Activated naive CD4-positive, alpha-beta T cell treated with anti-CD3 and anti-CD28 coated beads for 36 hours (primary cell): ENCODE measurements at regions of chr2 and their contacts with region 1.

Region 1: DNA sequence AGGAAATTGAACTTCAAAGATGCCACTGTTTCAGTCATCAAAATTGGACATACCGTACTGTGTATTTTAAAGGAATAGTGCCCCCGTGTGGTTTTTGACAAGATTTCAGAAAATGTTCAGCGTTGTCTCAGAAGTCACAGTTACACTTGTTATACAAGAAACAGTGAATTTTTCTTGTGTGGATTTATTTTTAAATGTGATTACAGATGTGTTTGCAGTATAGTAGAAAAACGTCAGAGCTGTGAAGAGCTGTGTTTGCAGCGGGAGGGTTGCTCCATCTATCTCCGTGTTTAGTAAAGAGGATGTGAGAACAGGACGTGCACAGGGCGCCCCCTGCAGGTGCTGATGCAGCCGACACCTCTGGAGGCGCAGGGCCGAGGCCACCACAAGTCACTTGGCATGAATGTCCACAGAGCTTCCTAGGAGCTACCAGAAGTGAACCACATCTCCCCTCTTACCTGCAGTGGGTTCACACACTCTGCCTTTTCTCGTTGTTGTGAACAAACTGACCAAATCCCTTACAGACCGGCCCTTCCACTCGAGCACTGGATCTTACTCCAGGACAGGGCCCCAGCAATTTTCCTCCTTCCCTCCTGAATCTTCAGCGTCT is 73.1 kb downstream of the CACNB4 start:
- DNase-seq: peak; percentile 87
- H3K4me3 Mint-ChIP-seq: peak overlapping the region; percentile 73
- H3K27ac Mint-ChIP-seq: peak overlapping the region; percentile 63
- H3K4me1 Mint-ChIP-seq: peaks cover 4% of the 10 kb centered on the region
- H3K27me3 Mint-ChIP-seq: peaks cover 5% of the 10 kb centered on the region

Region 2: GRCh38 chr2:151978709-151979108 is 47.1 kb before region 1 on chr2:
- CTCF ChIA-PET with region 1: interaction called, 11 read pairs
- intact Hi-C with region 1: no loop called
- DNase-seq: no peak
- H3K4me3 Mint-ChIP-seq: no peak overlapping the region
- H3K27ac Mint-ChIP-seq: no peak overlapping the region
- H3K4me1 Mint-ChIP-seq: no peaks in the 10 kb centered on the region
- H3K27me3 Mint-ChIP-seq: peaks cover 2% of the 10 kb centered on the region

Region 3: DNA sequence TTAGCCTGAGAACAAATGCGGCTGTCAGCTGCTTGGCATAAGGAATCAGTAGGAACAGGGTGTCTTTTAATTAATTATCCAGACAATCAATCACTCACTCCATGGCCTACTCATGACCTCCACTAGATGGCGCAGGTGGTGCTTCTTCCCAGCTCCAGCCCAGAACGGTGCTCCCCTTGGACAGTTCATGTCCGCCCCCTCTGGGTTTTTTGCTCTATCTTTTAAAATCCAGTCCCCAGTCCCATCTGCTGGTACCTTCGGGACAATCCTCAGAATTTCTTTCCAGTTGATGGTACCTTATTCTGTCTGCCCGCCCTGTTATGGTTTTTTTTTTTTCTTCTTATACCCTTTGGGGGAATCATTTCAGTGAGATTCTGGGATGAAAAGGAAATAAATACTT is 26.7 kb before region 1 on chr2:
- CTCF ChIA-PET with region 1: interaction called, 44 read pairs
- intact Hi-C with region 1: loop called (anchors 1 kb)
- DNase-seq: peak; percentile 58
- H3K4me3 Mint-ChIP-seq: no peak overlapping the region
- H3K27ac Mint-ChIP-seq: no peak overlapping the region
- H3K4me1 Mint-ChIP-seq: no peaks in the 10 kb centered on the region
- H3K27me3 Mint-ChIP-seq: no peaks in the 10 kb centered on the region

Region 4: DNA sequence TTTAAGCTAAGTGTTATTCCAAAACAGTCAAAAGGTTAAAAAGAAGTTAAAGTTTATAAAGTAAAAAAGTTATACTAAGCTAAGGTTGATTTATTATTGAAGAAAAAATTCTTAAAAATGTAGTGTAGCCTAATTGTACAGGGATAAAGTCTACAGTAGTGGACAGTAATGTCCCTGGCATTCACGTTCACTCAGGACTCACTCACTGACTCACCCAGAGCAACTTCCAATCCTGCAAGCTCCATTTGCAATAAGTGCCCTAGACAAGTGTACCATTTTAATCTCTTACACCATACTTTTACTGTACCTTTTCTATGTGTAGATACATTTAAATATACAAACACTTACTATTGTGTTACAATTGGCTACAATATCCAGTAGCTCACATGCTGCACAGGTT is 13.1 kb before region 1 on chr2:
- CTCF ChIA-PET with region 1: interaction called, 31 read pairs
- intact Hi-C with region 1: no loop called
- DNase-seq: no peak
- H3K4me3 Mint-ChIP-seq: no peak overlapping the region
- H3K27ac Mint-ChIP-seq: no peak overlapping the region
- H3K4me1 Mint-ChIP-seq: no peaks in the 10 kb centered on the region
- H3K27me3 Mint-ChIP-seq: peaks cover 1% of the 10 kb centered on the region

Region 5: DNA sequence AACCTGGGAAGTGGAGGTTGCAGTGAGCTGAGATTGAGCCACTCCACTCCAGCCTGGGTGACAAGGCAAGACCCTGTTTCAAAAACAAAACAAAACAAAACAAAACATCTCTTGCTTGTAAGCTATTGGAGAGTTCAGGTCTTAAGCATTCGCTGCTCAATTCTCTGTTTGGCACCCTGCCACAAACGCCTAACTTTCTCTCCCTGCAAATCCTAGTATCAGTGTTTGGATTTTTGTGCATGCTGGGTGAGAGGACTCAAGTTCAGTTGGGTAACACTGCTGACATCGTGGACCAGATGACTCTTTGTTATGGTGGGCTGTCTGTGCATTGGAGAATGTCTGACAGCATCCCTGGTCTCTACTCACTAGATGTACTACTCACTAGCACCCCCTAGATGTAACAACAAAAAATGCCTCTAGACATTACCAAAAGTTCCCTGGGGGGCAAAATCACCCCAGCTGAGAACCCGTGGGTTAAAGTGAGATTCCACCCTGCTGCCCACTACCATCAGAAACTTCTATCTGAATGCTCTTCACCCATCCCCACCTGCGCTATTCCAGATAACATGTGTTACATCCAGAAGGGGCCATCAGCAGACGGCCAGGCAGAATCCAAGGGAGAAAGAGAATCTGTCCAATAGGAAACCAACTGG is 22.2 kb after region 1 on chr2:
- CTCF ChIA-PET with region 1: interaction called, 12 read pairs
- intact Hi-C with region 1: no loop called
- DNase-seq: no peak
- H3K4me3 Mint-ChIP-seq: no peak overlapping the region
- H3K27ac Mint-ChIP-seq: no peak overlapping the region
- H3K4me1 Mint-ChIP-seq: no peaks in the 10 kb centered on the region
- H3K27me3 Mint-ChIP-seq: no peaks in the 10 kb centered on the region

Region 6: GRCh38 chr2:152278526-152278925 is 252.7 kb after region 1 on chr2:
- CTCF ChIA-PET with region 1: no interaction called
- intact Hi-C with region 1: no loop called
- DNase-seq: no peak
- H3K4me3 Mint-ChIP-seq: no peak overlapping the region
- H3K27ac Mint-ChIP-seq: no peak overlapping the region
- H3K4me1 Mint-ChIP-seq: no peaks in the 10 kb centered on the region
- H3K27me3 Mint-ChIP-seq: peaks cover 3% of the 10 kb centered on the region